ENCODE measurements at regions of chr9 and their contacts with region 1.

Region 1: GRCh38 chr9:6353851-6354686 is 25.9 kb downstream of the TPD52L3 start:
- DNase-seq: no peak
- H3K4me3 Mint-ChIP-seq: no peak overlapping the region
- H3K27ac Mint-ChIP-seq: no peak overlapping the region
- H3K4me1 Mint-ChIP-seq: peaks cover 15% of the 10 kb centered on the region
- H3K27me3 Mint-ChIP-seq: peaks cover 23% of the 10 kb centered on the region

Region 2: GRCh38 chr9:6055213-6055612 is 298.9 kb before region 1 on chr9:
- intact Hi-C with region 1: loop called (anchors 5 kb)
- DNase-seq: peak; percentile 22
- H3K4me3 Mint-ChIP-seq: no peak overlapping the region
- H3K27ac Mint-ChIP-seq: no peak overlapping the region
- H3K4me1 Mint-ChIP-seq: peaks cover 2% of the 10 kb centered on the region
- H3K27me3 Mint-ChIP-seq: peaks cover 13% of the 10 kb centered on the region

Region 3: GRCh38 chr9:6428940-6429889 is 75.1 kb after region 1 on chr9:
- intact Hi-C with region 1: loop called (anchors 2 kb)
- DNase-seq: peak; percentile 31
- H3K4me3 Mint-ChIP-seq: peak overlapping the region; percentile 41
- H3K27ac Mint-ChIP-seq: peak overlapping the region; percentile 69
- H3K4me1 Mint-ChIP-seq: peaks cover 61% of the 10 kb centered on the region
- H3K27me3 Mint-ChIP-seq: no peaks in the 10 kb centered on the region

Region 4: GRCh38 chr9:6467006-6467625 is 113.0 kb after region 1 on chr9:
- intact Hi-C with region 1: loop called (anchors 10 kb)
- DNase-seq: no peak
- H3K4me3 Mint-ChIP-seq: no peak overlapping the region
- H3K27ac Mint-ChIP-seq: no peak overlapping the region
- H3K4me1 Mint-ChIP-seq: peaks cover 21% of the 10 kb centered on the region
- H3K27me3 Mint-ChIP-seq: no peaks in the 10 kb centered on the region

Region 5: DNA sequence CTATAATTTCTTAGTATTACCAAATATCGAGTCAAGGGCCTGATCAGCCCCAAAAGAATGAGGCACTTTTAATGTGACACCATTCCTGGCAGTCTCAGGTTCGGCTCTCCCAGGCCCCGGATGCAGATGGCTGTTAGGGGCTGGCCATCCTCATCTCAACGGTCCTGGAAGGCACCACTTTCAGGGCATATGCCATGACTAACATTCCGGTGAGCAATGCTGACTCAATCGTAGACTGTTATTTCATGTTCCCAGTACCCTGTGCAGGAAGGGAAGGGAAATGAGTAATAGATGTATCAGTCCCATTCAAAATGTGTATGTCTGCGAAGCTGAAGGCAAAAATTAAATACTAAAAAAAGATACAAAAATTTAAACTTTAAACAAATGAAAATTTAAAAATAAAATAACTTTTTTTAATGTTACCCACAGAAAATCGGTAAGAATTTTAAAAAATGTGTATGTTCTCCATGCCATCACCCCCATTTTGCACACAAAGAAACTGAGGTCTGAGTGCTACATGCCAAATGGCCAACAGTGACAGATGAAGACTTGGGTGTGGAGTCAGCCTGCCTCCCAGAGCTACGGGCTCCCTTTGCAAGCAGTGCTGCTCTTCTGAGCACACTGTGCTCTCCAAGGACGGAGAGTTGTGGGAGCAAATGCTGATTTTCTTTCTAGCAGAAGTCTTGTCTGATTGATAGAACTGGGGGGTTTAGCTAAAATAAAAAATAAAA is 212.5 kb after region 1 on chr9:
- intact Hi-C with region 1: loop called (anchors 1 kb)
- DNase-seq: peak; percentile 19
- H3K4me3 Mint-ChIP-seq: peak overlapping the region; percentile 33
- H3K27ac Mint-ChIP-seq: peak overlapping the region; percentile 82
- H3K4me1 Mint-ChIP-seq: peaks cover 19% of the 10 kb centered on the region
- H3K27me3 Mint-ChIP-seq: peaks cover 5% of the 10 kb centered on the region

Region 6: GRCh38 chr9:6667633-6668280 is 313.7 kb after region 1 on chr9:
- intact Hi-C with region 1: loop called (anchors 2 kb)
- DNase-seq: no peak
- H3K4me3 Mint-ChIP-seq: no peak overlapping the region
- H3K27ac Mint-ChIP-seq: no peak overlapping the region
- H3K4me1 Mint-ChIP-seq: peaks cover 1% of the 10 kb centered on the region
- H3K27me3 Mint-ChIP-seq: no peaks in the 10 kb centered on the region

Measured in activated T-helper 2 cell treated with anti-CD3 and anti-CD28 coated beads, Interferon-gamma antibody, Interleukin-2, Interleukin-4, amounts not matched to agents 10 μg/mL and 5 μg/mL and 100 μg/mL, durations not matched to agents 14 hours and 24 hours and 36 hours (primary cell).